ENCODE measurements at regions of chr5 and their contacts with region 1.

Region 1: DNA sequence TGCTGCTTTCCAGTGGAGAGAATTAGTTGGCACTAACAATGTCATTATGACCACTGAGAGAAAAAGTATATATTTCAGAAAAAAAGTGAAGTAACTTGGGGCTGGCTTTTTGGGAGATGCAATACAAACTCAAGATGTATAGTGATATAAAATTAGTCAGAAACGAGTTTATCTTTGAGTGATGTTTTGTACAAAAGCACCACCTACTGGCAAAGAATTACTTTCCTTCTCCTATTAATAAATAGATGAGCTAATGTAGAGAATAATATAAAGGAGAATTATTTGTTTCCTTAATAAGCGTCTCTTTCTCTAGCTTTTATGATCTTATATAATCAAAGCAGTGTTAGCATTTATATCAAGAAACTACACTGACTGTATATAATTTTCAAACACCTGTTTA is 158.8 kb downstream of the MEF2C start:
- H3K4me3 ChIP-seq: no peak overlapping the region
- H3K27ac ChIP-seq: no peak overlapping the region
- H3K4me1 ChIP-seq: peaks cover 7% of the 10 kb centered on the region
- CTCF ChIP-seq: no peak

Region 2: GRCh38 chr5:87780831-87781760 is 943.1 kb before region 1 on chr5:
- CTCF ChIA-PET with region 1: interaction called, 17 read pairs
- POLR2A ChIA-PET with region 1: no interaction called
- H3K4me3 ChIP-seq: no peak overlapping the region
- H3K27ac ChIP-seq: no peak overlapping the region
- H3K4me1 ChIP-seq: no peaks in the 10 kb centered on the region
- CTCF ChIP-seq: peak; percentile 78

Region 3: GRCh38 chr5:88713818-88714217 is 10.4 kb before region 1 on chr5:
- CTCF ChIA-PET with region 1: interaction called, 12 read pairs
- POLR2A ChIA-PET with region 1: no interaction called
- H3K4me3 ChIP-seq: no peak overlapping the region
- H3K27ac ChIP-seq: no peak overlapping the region
- H3K4me1 ChIP-seq: no peaks in the 10 kb centered on the region
- CTCF ChIP-seq: no peak

Measured in HEK293 (cell line).